ENCODE measurements at regions of chr14 and their contacts with region 1.

Region 1: DNA sequence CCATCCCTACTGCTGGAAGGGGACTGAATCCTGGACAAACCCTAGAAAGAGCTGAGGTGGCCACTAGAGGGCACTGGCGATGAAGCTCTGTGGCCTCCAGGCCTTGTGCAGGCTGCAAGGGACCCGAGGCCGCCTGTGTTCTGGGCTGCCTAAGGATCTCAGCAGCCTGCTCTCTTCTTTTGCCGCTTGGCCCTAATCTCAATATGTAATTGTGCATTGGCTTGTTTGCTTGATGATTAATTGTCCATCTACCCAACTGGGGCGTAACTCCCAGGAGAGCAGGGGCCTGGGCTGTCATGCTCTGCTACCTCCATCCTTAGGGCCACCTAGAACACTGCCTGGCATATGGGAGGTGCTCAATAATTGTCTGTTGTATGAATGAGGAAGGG is 73.8 kb downstream of the SYNE3 start:
- DNase-seq: peak; percentile 57
- H3K4me3 ChIP-seq: no peak overlapping the region
- H3K27ac ChIP-seq: no peak overlapping the region
- H3K27me3 ChIP-seq: no peaks in the 10 kb centered on the region
- CTCF ChIP-seq: peak; percentile 95

Region 2: GRCh38 chr14:95431199-95432143 is 11.2 kb before region 1 on chr14:
- CTCF ChIA-PET with region 1: interaction called, 19 read pairs
- POLR2A ChIA-PET with region 1: no interaction called
- DNase-seq: no peak
- H3K4me3 ChIP-seq: no peak overlapping the region
- H3K27ac ChIP-seq: no peak overlapping the region
- H3K27me3 ChIP-seq: no peaks in the 10 kb centered on the region
- CTCF ChIP-seq: peak; percentile 48

Region 3: DNA sequence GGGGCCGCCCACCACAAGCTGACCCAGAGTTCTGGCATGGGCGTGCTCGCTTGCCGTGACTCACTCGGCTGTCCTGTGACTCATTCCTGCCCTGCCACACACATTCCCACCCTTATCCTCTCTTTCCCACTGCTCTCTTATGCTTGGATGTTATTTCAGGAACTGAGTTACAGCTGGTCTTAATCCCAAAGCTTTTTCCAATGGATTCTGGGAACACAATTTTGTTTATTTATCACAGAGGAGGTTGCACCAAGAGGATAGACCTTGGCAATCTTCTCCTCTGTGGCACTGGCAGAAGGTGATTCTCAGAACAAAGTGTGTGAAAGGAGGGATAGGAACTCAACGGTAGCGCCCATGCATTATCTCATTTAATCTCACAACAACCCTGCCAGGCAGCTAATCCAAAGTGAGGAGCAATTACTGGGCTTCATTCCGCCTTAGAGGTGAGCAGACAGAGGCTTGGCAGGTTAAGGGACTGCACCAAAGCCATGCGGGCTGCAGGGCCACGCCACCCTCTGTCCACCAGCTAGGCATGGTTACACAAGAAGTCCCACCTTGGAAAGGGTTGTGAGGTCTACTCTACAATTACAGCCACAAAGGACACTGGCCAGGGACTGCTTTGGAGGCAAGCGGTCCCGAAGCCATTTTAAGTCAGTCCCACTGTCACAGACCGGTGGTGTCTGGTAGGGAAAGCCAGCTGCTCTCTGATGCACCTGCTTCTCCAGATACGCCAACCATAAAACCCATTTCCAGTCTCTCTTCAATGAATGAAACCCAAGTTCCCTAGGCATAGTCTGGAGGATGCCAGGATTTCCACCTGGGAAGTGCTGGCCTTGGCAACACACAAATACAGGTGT is 40.9 kb after region 1 on chr14:
- CTCF ChIA-PET with region 1: interaction called, 14 read pairs
- POLR2A ChIA-PET with region 1: no interaction called
- DNase-seq: peak; percentile 87
- H3K4me3 ChIP-seq: no peak overlapping the region
- H3K27ac ChIP-seq: peak overlapping the region; percentile 81
- H3K27me3 ChIP-seq: no peaks in the 10 kb centered on the region
- CTCF ChIP-seq: no peak

Region 4: DNA sequence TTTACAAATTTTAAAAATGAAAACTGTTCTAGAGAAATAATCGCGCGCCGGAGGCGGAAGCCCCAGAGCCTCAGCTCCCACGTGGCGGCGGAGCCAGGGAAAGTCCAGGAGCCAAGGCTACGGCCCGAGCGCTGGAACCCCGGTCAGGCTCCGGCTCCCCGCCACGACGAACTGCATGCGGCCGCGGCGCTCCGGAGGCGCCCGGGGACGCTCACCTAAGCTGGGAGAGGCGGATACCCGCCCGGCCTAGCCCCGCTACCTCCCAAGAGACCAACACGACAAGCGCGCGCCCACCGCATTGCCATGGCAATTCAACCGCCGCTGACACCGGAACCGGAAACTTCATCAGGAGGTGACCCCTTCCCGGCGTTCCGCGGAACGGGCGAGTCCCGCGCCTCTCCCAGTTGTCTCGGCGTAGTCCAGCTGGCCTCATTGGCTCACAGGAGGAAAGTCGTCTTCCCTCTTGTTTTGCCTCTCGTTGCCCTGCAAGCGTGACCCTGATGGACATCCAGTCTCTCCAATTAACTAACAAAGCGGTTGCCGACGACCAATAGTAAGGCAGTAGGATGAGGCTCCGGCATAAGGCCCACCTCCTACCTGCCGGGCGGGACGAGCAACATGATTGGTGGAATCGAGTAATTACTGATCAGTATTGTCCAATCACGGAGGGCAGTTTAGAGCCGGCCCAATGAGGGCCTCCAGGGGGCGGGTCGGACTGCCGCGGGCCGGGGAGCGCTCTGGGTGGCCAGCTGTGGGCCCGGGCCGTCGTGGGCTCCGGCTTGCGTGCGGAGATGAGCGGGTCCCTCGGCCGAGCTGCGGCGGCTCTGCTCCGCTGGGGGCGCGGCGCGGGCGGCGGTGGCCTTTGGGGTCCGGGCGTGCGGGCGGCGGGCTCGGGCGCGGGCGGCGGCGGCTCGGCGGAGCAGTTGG is 91.9 kb after region 1 on chr14 and contains the start of gene GLRX5:
- CTCF ChIA-PET with region 1: interaction called, 145 read pairs
- POLR2A ChIA-PET with region 1: no interaction called
- DNase-seq: peak; percentile 100
- H3K4me3 ChIP-seq: peak within 1 kb of the TSS; percentile 83
- H3K27ac ChIP-seq: peak within 1 kb of the TSS; percentile 90
- H3K27me3 ChIP-seq: no peaks in the 10 kb centered on the region
- CTCF ChIP-seq: no peak
- polyA plus RNA-seq, gene GLRX5: 43.6 and 58.6 TPM in 2 replicates

Region 5: GRCh38 chr14:95561001-95561412 is 118.4 kb after region 1 on chr14:
- CTCF ChIA-PET with region 1: interaction called, 15 read pairs
- POLR2A ChIA-PET with region 1: no interaction called
- DNase-seq: peak; percentile 68
- H3K4me3 ChIP-seq: no peak overlapping the region
- H3K27ac ChIP-seq: no peak overlapping the region
- H3K27me3 ChIP-seq: peaks cover 2% of the 10 kb centered on the region
- CTCF ChIP-seq: peak; percentile 97

Region 6: GRCh38 chr14:95620659-95621059 is 178.0 kb after region 1 on chr14:
- CTCF ChIA-PET with region 1: no interaction called
- POLR2A ChIA-PET with region 1: no interaction called
- DNase-seq: no peak
- H3K4me3 ChIP-seq: no peak overlapping the region
- H3K27ac ChIP-seq: no peak overlapping the region
- H3K27me3 ChIP-seq: no peaks in the 10 kb centered on the region
- CTCF ChIP-seq: no peak

Measured in AG04450 (cell line).